ENCODE measurements at regions of chr11 and their contacts with region 1.

Region 1: GRCh38 chr11:62621567-62622470 is at the start of gene B3GAT3:
- DNase-seq: peak; percentile 97 to 100 (median 98)

Region 2: GRCh38 chr11:61994981-61995380 is 626.8 kb before region 1 on chr11:
- intact Hi-C with region 1: no loop called
- DNase-seq: peak in 1 of 10 donors; percentile 29

Region 3: GRCh38 chr11:62573592-62574362 is 48.0 kb before region 1 on chr11 and contains the start of gene EEF1G:
- intact Hi-C with region 1: loop called (anchors 5 kb)
- DNase-seq: peak; percentile 97 to 100 (median 98)

Region 4: GRCh38 chr11:62601394-62602140 is 20.3 kb before region 1 on chr11 and contains the start of gene MTA2:
- intact Hi-C with region 1: loop called (anchors 2 kb)
- DNase-seq: peak; percentile 95 to 99 (median 96)

Region 5: DNA sequence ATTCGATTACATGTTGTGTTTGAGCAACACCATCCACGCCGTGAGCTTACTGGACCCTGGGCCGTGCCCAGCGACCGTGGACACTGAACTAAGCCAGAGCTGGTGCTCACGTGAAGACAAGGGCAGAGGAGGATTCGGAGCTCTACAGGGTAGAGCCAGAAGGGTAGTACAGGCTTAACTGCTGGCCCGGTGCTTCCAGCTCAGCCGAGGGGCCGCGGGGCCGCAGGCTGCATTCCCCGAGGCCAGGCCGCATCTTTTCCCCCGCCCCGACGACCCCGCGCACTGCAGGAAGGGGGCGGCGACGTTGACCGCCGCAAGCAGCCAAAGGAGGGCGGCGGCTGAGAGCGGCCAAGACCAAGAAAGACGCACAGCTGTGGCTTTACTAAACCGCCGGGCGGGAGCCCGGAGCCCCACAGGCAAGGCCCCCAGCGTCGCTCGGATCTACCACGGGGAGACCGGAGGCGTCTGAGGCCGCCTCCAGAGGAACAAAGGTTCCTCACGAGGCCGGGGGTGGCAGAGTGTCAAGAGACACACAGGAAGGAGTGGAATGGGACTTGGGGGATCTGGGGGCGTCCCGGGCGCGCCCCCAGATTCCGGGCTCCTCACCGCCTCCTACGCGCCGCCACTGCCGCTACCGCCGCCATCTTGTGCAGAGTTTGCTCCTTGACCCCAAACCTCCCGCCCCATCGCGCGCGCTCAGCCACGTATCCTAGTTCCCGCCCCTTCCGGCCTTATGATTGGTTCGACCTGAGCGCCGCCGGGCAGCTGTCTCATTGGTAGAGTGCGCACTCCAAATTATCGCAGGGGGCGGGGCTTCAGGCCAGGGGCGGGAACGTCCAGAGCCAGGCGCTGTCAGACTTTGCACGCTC is 24.4 kb after region 1 on chr11 and contains the start of gene GANAB:
- intact Hi-C with region 1: loop called (anchors 1 kb)
- DNase-seq: peak; percentile 98 to 100 (median 99)

Region 6: DNA sequence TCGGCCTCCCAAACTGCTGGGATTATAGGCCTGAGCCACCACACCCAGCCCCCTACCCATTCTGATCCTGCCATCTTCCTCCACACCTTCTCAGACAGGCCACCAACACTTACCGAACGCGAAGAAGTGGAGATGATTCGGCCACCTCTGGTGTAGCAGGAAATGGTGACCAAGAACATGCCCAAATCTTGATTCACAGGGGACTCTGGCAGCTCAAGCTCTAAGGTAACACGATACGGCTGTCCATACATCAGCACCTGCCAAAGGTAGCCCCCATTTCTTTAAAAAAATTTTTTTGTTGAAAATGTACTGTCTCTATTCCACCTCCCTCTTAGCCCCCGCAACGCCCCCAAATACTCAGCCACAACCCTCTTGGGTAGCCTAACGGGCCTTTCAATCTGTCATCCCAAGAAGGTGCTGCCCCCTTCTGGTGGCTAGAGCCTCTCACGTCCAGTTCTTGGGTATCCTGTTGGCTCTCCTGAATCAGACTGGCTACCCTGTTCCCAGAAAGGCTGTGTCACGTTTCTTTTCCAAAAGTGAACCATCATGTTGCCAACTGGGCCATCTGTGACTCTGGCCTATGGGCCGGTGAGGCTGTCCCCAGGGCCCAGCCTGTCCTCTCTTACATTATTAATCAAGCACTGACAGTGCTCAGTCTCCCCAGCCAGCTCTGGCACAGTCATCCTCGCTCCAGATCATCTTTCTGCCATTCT is 72.8 kb after region 1 on chr11:
- intact Hi-C with region 1: no loop called
- DNase-seq: peak in 7 of 10 donors; percentile 62 to 95 (median 75)

Region 7: DNA sequence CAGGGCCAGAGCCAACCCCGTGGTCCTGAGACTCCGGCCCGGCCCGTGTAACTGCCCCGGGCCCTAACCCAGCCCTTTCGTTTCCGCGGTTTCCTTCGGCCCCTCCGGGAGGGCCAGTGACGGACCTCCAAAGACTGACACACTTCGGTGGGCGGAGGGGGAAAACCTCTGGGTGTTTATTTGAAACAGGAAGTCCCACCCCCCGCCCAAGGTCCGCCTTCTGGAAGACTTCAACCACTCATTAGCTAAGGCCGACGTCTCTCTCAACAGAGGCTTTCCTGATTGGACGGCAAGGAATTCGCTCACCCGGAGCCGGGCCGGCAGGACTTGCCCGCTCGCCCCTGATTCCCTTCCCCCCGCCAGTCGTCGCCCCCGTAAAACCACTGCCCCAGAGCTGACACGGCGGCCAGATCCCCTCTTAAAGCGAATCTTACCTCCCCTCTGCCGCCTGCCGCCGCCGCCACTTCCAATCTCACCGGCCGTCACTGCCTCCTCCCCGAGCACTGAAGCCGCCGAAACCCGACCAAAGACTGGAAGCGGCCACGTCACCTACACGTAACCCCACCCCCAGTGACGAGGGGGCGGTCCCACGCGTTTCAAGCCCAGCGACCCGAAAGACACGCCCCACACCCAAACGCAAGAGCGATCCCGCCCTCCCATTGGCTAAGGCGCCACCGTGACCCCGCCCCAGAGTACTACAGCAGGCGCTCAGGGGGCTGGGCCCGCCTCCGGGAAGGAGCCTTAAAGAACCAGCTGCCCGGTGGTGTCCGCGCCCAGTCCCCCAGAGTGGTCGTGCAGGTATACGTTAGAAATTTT is 209.9 kb after region 1 on chr11 and contains the start of gene STX5:
- intact Hi-C with region 1: no loop called
- DNase-seq: peak; percentile 100